ENCODE measurements at regions of chr4 and their contacts with region 1.

Region 1: GRCh38 chr4:185471235-185472102 is at the start of gene CCDC110:
- DNase-seq: peak; percentile 90 to 99 (median 99)
- ATAC-seq: peak; percentile 99
- H3K4me3 ChIP-seq: peak within 1 kb of the TSS; percentile 55
- H3K27ac ChIP-seq: no peak within 1 kb of the TSS; the same call in 2 of the 3 replicates
- H3K4me1 ChIP-seq: peaks cover 9 to 12% of the 10 kb centered on the region in 2 experiments
- H3K27me3 ChIP-seq: peaks cover 26 to 32% of the 10 kb centered on the region in 2 experiments
- CTCF ChIP-seq: peak; percentile 48 to 91 (median 67); a peak in 5 of 6 replicates
- EP300 ChIP-seq: no peak
- POLR2A ChIP-seq: no peak
- RAD21 ChIP-seq: peak; percentile 54 to 64
- polyA plus RNA-seq, gene CCDC110: 0.04 TPM in 1 of 2 experiments, not detected in the other

Region 2: DNA sequence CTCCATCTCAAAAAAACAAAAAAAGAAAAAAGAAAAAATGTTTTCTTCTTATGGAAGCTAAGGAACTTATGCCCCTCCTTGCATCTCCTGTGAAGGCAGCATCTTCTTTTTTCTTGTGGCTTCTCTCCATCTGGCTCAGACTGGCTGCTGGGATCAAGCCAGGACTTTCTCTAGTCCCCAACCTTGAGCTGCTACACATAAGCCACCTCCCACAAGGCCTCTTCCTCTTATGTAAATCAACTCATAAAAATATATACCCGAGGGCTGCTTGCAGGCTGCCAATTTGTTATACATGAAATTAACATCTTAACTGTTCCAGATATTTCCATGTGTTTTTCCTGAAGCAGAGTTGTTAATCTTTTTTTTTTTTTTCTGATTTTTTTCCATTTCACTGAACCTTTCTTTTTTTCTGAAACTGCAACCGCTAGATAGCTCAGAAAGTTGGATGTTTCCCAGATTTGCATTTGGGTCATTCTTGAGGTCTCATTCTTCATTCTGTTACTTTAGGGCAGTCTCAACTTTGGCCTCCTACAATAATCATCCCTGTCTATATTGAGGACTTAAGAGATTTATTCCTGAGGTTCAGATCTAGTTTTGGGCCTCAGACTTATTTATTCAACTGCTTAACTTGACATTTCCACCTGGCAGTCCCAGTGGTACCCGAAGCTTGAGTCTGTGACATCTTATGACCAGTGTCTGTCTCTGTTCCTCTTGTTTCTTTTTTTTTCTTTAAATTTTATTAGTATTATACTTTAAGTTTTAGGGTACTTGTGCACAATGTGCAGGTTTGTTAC is 251.7 kb before region 1 on chr4:
- CTCF ChIA-PET with region 1: no interaction called
- POLR2A ChIA-PET with region 1: no interaction called
- in situ Hi-C with region 1: no loop called
- intact Hi-C with region 1: no loop called
- DNase-seq: no peak
- ATAC-seq: peak; percentile 63
- H3K4me3 ChIP-seq: no peak overlapping the region
- H3K27ac ChIP-seq: no peak overlapping the region
- H3K4me1 ChIP-seq: peaks cover 0 to 4% of the 10 kb centered on the region in 2 experiments; a peak in 2 of 5 replicates
- H3K27me3 ChIP-seq: no peaks in the 10 kb centered on the region
- CTCF ChIP-seq: no peak
- EP300 ChIP-seq: no peak
- POLR2A ChIP-seq: no peak
- RAD21 ChIP-seq: no peak

Region 3: DNA sequence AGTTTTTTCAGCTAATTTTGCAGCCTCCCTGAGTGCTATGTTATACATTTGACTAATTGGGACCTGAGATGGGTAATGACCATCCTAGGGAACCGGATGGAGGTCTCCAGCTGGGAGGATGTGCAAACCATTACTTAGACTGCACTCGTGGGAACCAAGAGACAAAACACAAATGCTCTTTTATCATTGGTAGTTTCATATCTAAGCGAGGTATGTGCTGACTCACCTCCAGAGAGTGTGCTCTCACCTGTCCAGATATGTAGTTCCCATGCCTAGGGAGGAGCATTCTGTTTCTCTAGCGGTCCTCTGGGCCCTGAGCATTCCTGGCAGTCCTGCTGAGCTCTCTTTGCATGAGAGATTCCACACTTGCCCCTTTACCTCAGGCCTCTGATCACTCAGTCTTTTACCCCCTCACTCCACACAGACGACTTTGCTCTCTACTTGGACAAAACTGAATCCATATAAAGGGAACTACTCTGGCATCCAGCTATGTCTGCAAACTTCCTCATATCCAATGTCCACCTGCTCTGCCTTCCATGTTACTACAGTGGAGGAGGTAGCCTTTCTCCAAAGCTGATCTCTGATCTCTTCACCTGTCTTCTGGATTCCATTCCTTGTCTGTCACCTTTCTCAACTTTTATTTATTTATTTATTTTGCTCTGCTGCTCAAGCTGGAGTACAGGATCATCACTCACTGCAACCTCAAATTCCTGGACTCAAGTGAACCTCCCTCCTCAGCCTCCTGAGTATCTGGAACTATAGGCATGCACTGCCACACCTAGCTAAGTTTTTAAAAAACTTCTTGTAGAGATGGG is 164.1 kb before region 1 on chr4:
- CTCF ChIA-PET with region 1: no interaction called
- POLR2A ChIA-PET with region 1: no interaction called
- in situ Hi-C with region 1: no loop called
- intact Hi-C with region 1: no loop called
- DNase-seq: no peak
- ATAC-seq: peak; percentile 29; the same call in 1 of the 3 replicates
- H3K4me3 ChIP-seq: no peak overlapping the region
- H3K27ac ChIP-seq: no peak overlapping the region
- H3K4me1 ChIP-seq: no peaks in the 10 kb centered on the region
- H3K27me3 ChIP-seq: no peaks in the 10 kb centered on the region
- CTCF ChIP-seq: no peak
- EP300 ChIP-seq: no peak
- POLR2A ChIP-seq: no peak
- RAD21 ChIP-seq: no peak

Region 4: DNA sequence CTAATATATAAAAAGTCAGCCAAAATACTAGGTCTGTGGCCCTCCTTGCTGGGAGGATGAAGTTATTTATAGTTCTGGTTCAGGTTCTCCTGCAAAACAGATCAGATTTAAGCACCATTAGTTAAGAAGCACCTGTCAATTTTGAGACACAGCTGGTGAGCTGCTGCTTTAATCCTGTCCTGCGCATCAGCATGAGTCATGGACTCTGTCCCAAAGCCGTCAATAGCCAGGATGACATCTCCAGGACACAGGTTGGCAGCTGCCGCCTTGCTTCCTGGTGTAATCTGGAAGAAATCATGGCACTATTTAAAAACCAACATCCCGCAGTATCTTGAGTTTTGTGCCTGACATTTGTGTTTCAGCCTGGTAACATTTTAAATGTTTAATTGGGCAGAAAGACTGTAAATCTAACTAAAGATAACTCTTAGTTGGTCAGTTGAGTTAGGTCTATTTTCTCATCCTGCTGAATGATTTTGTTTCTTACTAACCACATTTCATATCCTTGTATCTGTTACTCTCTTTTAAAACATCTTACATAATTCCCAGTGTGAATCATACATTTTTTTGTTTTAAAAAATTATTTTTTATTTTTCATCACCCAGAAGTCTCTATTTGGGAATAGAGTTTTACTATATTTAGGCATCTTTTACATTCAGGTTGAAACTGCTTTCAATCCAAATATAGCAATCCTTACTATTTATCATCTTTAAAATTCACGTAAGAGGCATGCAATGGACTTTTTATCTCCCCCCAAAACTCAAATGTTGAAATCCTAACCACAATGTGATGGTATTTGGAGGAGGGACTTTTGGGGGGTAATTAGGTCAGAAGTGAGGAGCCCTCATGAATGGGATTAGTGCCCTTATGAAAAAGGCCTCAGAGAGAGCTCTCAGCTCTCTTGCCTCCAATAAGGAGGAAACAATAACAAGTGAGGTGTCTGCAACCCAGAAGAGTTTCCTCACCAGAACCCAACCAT is 53.7 kb after region 1 on chr4:
- CTCF ChIA-PET with region 1: no interaction called
- POLR2A ChIA-PET with region 1: no interaction called
- in situ Hi-C with region 1: no loop called
- intact Hi-C with region 1: loop called (anchors 5 kb)
- DNase-seq: no peak
- ATAC-seq: no peak
- H3K4me3 ChIP-seq: no peak overlapping the region
- H3K27ac ChIP-seq: no peak overlapping the region
- H3K4me1 ChIP-seq: no peaks in the 10 kb centered on the region
- H3K27me3 ChIP-seq: peaks cover 10 to 23% of the 10 kb centered on the region in 2 experiments; a peak in 4 of 5 replicates
- CTCF ChIP-seq: no peak
- EP300 ChIP-seq: no peak
- POLR2A ChIP-seq: no peak
- RAD21 ChIP-seq: no peak

Region 5: GRCh38 chr4:185597532-185598188 is 126.2 kb after region 1 on chr4:
- CTCF ChIA-PET with region 1: interaction called, 9 read pairs
- POLR2A ChIA-PET with region 1: no interaction called
- in situ Hi-C with region 1: no loop called
- intact Hi-C with region 1: loop called (anchors 1 kb)
- DNase-seq: peak; percentile 65 to 78 (median 67)
- ATAC-seq: peak; percentile 89
- H3K4me3 ChIP-seq: no peak overlapping the region
- H3K27ac ChIP-seq: no peak overlapping the region
- H3K4me1 ChIP-seq: no peaks in the 10 kb centered on the region
- H3K27me3 ChIP-seq: peaks cover 17 to 25% of the 10 kb centered on the region in 2 experiments
- CTCF ChIP-seq: peak; percentile 88 to 95 (median 94)
- EP300 ChIP-seq: no peak
- POLR2A ChIP-seq: no peak
- RAD21 ChIP-seq: peak; percentile 77 to 85